CD14-positive monocyte (primary cell): ENCODE measurements at regions of chr12 and their contacts with region 1.

Region 1: GRCh38 chr12:51871126-51871525 is 16.8 kb upstream of the ANKRD33 start:
- DNase-seq: peak; percentile 69 to 86 (median 82)
- H3K4me3 ChIP-seq: peak overlapping the region in 1 of 3 experiments; percentile 66
- H3K4me3 Mint-ChIP-seq: peak overlapping the region in 1 of 2 donors; percentile 69
- H3K27ac ChIP-seq: no peak overlapping the region
- H3K27ac Mint-ChIP-seq: peak overlapping the region in 4 of 7 donors; percentile 3 to 65 (median 57)
- H3K4me1 ChIP-seq: peaks cover 58 to 68% of the 10 kb centered on the region in 2 donors
- H3K4me1 Mint-ChIP-seq: peaks cover 71% of the 10 kb centered on the region
- H3K27me3 ChIP-seq: peaks cover 0 to 18% of the 10 kb centered on the region in 2 donors
- H3K27me3 Mint-ChIP-seq: peaks cover 17 to 30% (median 27%) of the 10 kb centered on the region in 3 donors
- CTCF ChIP-seq: peak; percentile 41

Region 2: GRCh38 chr12:51424662-51425438 is 446.3 kb before region 1 on chr12 and contains the start of gene SLC4A8:
- intact Hi-C with region 1: loop called in 1 of 2 experiments (anchors 10 kb)
- DNase-seq: peak; percentile 63 to 71 (median 64)
- H3K4me3 ChIP-seq: peak within 1 kb of the TSS; percentile 18 to 70 (median 37)
- H3K4me3 Mint-ChIP-seq: peak within 1 kb of the TSS; percentile 70 to 83
- H3K27ac ChIP-seq: no peak within 1 kb of the TSS
- H3K27ac Mint-ChIP-seq: no peak within 1 kb of the TSS
- H3K4me1 ChIP-seq: peaks cover 10 to 11% of the 10 kb centered on the region in 2 donors
- H3K4me1 Mint-ChIP-seq: peaks cover 11% of the 10 kb centered on the region
- H3K27me3 ChIP-seq: peaks cover 10 to 26% of the 10 kb centered on the region in 2 donors
- H3K27me3 Mint-ChIP-seq: peaks cover 22 to 35% (median 25%) of the 10 kb centered on the region in 3 donors
- CTCF ChIP-seq: peak; percentile 92
- polyA plus RNA-seq, gene SLC4A8: 1.9 to 5.4 (median 2.3) TPM

Region 3: DNA sequence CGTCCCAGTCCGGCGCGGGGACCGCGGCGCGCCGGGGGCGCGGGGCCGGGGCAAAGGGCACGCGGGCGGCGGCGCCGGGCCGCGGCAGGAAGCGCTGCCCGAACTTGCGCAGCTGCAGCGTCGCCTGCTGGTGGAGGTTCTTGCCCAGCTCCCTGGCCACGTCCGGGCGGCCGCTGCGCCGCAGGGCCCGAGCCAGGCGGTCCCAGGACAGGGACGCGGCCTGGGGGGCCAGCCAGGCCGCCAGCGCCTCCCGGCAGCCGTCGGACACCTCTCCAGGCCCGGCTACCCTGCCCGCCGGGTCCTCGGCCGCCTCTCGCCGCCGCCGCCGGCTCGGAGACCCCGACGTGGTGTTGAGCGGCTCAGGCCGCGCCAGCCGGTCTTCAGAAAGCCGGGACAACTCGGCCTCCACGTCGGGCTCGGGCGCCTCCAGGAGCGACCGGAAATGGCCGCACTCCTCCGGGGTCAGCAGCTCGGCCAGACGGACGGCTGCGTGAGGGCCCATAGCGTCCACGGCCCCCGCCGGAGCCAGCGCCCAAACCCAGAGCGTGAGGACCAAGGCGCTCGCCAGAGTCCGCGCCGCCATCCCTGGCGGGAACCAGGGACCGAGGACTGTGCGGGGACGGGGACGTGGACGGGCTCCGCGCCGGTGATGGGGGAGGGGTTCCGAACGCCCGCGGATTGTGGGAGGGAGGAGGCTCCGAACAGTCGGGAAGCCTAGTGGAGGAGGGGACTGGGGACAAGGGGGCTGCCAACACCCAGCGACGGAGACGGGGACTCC is 56.6 kb before region 1 on chr12:
- intact Hi-C with region 1: loop called in 1 of 2 experiments (anchors 5 kb)
- DNase-seq: peak; percentile 79 to 80 (median 80)
- H3K4me3 ChIP-seq: peak overlapping the region; percentile 19 to 76 (median 35)
- H3K4me3 Mint-ChIP-seq: peak overlapping the region; percentile 70 to 78
- H3K27ac ChIP-seq: peak overlapping the region in 1 of 2 donors; percentile 26
- H3K27ac Mint-ChIP-seq: peak overlapping the region in 2 of 7 donors; percentile 36 to 50
- H3K4me1 ChIP-seq: peaks cover 20 to 40% of the 10 kb centered on the region in 2 donors
- H3K4me1 Mint-ChIP-seq: peaks cover 32% of the 10 kb centered on the region
- H3K27me3 ChIP-seq: peaks cover 0 to 17% of the 10 kb centered on the region in 2 donors
- H3K27me3 Mint-ChIP-seq: peaks cover 10 to 33% (median 25%) of the 10 kb centered on the region in 3 donors
- CTCF ChIP-seq: peak; percentile 66

Region 4: GRCh38 chr12:51823875-51824565 is 47.1 kb before region 1 on chr12:
- intact Hi-C with region 1: loop called in 1 of 2 experiments (anchors 5 kb)
- DNase-seq: peak in 2 of 3 donors; percentile 46 to 52
- H3K4me3 ChIP-seq: no peak overlapping the region
- H3K4me3 Mint-ChIP-seq: peak overlapping the region in 1 of 2 donors; percentile 49
- H3K27ac ChIP-seq: no peak overlapping the region
- H3K27ac Mint-ChIP-seq: no peak overlapping the region
- H3K4me1 ChIP-seq: peaks cover 53 to 80% of the 10 kb centered on the region in 2 donors
- H3K4me1 Mint-ChIP-seq: peaks cover 65% of the 10 kb centered on the region
- H3K27me3 ChIP-seq: peaks cover 0 to 7% of the 10 kb centered on the region in 2 donors
- H3K27me3 Mint-ChIP-seq: peaks cover 2 to 8% (median 2%) of the 10 kb centered on the region in 3 donors
- CTCF ChIP-seq: peak; percentile 50

Region 5: DNA sequence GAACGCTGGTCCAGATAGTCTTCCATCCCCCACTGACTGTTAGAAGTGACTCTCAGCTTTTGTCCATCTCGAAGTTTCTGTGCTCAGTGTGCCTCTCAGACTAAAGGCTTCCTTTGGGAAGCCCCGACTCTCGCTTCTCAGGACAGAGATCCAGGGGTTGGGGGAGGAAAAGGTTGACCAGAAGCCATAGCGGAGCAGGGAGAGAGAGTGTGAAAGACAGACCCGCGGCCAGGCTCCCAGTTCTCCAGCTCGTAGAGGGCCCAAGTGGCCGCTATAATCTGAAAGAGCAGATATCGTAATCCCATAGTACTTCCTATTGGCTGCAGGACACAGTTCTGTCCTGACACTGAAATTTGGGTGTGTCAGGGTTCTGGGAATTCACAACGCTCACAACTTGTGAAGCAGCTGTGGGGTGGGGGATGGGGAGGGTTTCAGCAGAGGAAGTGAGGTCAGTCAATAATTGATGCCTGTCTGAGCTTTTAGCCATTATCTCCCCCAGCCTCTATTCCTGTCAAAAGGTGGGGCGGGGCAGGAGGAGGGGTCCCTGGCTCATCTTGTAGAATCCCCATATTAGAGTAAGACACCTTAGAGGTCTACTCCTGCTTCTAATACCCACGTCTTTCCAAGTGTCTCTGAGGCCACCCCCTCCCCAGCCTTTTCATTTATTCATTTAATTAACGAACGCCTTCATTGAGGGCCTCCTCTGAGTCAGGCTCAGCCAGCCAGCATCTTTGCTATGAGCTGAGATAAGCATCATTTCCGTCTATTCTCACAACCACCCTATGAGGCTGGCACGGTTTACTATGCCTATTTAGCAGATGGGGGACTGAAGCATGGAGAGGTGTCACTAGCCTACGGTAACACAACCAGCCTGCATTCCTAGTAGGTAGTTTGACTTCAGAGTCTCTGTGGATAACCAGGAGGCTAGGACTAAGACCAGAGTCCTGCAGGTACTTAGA is 34.6 kb after region 1 on chr12:
- intact Hi-C with region 1: loop called in 1 of 2 experiments (anchors 2 kb)
- DNase-seq: peak in 2 of 3 donors; percentile 23 to 68
- H3K4me3 ChIP-seq: no peak overlapping the region
- H3K4me3 Mint-ChIP-seq: peak overlapping the region in 1 of 2 donors; percentile 52
- H3K27ac ChIP-seq: no peak overlapping the region
- H3K27ac Mint-ChIP-seq: peak overlapping the region in 4 of 7 donors; percentile 12 to 62 (median 52)
- H3K4me1 ChIP-seq: peaks cover 28 to 39% of the 10 kb centered on the region in 2 donors
- H3K4me1 Mint-ChIP-seq: peaks cover 36% of the 10 kb centered on the region
- H3K27me3 ChIP-seq: peaks cover 10 to 22% of the 10 kb centered on the region in 2 donors
- H3K27me3 Mint-ChIP-seq: peaks cover 19 to 27% (median 26%) of the 10 kb centered on the region in 3 donors
- CTCF ChIP-seq: no peak